Activated T-helper 2 cell treated with anti-CD3 and anti-CD28 coated beads, Interferon-gamma antibody, Interleukin-2, Interleukin-4, amounts not matched to agents 10 μg/mL and 5 μg/mL and 100 μg/mL, durations not matched to agents 14 hours and 24 hours and 36 hours (primary cell): ENCODE measurements at regions of chr2 and their contacts with region 1.

Region 1: DNA sequence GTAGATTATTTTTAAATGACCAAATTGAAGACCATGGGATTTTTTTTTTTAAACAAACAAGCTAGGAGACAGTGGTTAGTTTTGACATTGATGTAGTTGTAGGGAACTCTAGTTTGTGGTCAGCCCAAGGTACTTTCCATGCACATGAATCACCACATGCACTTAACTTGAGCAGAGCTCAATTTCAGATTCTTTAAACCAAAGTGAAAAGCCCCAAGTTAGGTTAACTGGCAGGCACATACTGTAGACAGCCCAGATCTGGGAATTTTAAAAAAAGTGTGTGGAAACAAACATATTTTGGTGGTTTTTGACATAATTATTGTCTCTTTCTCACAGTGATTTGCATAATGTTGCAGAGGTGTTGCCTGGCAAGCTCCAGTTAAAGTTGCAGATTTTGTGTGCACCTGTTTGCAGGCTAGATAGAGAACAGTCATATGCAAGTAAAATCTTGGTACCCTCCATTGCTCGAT is 88.4 kb downstream of the BCL2L11 start:
- DNase-seq: no peak
- H3K4me3 Mint-ChIP-seq: no peak overlapping the region
- H3K27ac Mint-ChIP-seq: peak overlapping the region; percentile 45
- H3K4me1 Mint-ChIP-seq: peaks cover 20% of the 10 kb centered on the region
- H3K27me3 Mint-ChIP-seq: peaks cover 18% of the 10 kb centered on the region

Region 2: GRCh38 chr2:111139637-111140317 is 69.3 kb before region 1 on chr2:
- intact Hi-C with region 1: no loop called
- DNase-seq: no peak
- H3K4me3 Mint-ChIP-seq: no peak overlapping the region
- H3K27ac Mint-ChIP-seq: no peak overlapping the region
- H3K4me1 Mint-ChIP-seq: peaks cover 31% of the 10 kb centered on the region
- H3K27me3 Mint-ChIP-seq: no peaks in the 10 kb centered on the region

Region 3: GRCh38 chr2:111168528-111169239 is 40.4 kb before region 1 on chr2:
- intact Hi-C with region 1: loop called (anchors 5 kb)
- DNase-seq: peak; percentile 34
- H3K4me3 Mint-ChIP-seq: no peak overlapping the region
- H3K27ac Mint-ChIP-seq: peak overlapping the region; percentile 18
- H3K4me1 Mint-ChIP-seq: peaks cover 26% of the 10 kb centered on the region
- H3K27me3 Mint-ChIP-seq: peaks cover 12% of the 10 kb centered on the region